Spleen (tissue), 13 donors: ENCODE measurements at regions of chr1 and their contacts with region 1.

Region 1: DNA sequence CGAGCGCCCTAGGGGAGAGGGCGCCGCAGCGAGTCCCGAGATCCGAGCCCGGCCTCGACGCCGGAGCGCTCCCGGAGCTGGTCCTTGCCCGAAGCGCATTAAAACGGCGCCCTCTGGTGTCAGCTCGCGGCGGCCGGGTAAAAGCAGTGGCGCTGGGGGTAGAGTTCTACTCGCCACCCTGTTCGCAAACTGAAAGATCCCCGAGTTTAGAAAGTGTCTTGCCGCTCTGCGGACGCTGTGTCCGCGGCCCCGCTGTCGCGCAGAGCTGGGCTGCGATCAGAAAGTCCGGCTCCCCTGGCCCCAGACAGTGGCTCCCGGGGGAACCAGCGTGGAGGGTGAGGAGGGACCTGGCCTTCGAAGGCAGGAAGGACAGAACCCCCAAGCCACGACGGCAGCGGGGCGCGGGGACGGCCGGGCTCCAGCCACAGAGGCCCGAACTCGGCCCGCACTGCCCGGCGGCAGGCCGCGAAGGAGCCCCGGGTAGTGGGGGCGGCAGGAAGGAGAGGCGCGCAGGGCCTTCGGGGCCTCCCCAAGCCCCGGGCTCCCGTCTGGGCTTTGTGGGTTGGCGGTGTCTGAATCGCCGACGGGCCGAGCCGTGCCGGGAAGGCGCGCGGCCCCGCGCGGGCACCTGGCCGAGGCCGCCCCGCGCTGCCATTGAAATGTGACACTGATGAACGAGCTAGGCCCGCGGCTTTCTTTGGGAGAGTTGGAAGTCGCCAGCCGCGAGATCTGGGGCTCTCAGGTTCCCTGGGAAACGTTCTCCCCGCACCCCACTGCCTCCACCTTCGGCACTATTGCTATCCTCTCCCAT is 39.1 kb upstream of the NFIA start:
- DNase-seq: peak; percentile 95
- H3K4me3 ChIP-seq: peak overlapping the region; percentile 4 to 71 (median 39)
- H3K27ac ChIP-seq: peak overlapping the region; percentile 59 to 85 (median 77)
- H3K4me1 ChIP-seq: peaks cover 8 to 14% (median 12%) of the 10 kb centered on the region in 6 donors
- H3K27me3 ChIP-seq: peaks cover 0 to 40% (median 5%) of the 10 kb centered on the region in 7 donors
- CTCF ChIP-seq: peak; percentile 60 to 90 (median 86)
- POLR2A ChIP-seq: no peak

Region 2: DNA sequence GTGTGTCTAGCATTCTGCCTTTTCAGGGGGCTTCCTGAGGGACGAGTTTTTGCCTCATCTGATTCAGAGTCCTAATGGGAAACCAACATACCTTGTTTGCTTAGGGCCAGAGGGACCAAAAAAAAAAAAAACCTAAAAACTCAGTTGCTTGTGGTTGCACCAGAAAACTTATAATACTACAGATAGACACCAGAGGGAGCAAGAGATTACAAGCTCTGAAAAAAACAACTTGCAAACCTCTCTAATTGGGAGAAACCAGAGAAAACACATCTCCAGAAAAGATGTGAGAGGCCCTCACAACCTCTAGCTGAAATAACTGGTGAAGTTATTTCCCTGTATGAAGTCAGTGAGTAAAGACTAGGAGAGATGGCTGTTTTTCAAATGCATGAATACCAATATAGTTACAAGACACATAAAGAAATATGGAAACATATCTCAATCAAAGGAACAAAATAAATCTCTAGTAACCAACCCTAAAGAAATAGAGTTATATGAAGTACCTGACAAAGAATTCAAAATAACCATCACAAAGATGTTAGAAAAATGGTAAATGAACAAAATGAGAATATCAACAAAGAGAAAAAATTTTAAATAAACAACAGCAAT is 194.5 kb before region 1 on chr1:
- intact Hi-C with region 1: loop called (anchors 5 kb)
- DNase-seq: no peak
- H3K4me3 ChIP-seq: no peak overlapping the region
- H3K27ac ChIP-seq: no peak overlapping the region
- H3K4me1 ChIP-seq: no peaks in the 10 kb centered on the region
- H3K27me3 ChIP-seq: no peaks in the 10 kb centered on the region
- CTCF ChIP-seq: peak in 8 of 11 experiments; percentile 20 to 52 (median 35)
- POLR2A ChIP-seq: no peak

Region 3: DNA sequence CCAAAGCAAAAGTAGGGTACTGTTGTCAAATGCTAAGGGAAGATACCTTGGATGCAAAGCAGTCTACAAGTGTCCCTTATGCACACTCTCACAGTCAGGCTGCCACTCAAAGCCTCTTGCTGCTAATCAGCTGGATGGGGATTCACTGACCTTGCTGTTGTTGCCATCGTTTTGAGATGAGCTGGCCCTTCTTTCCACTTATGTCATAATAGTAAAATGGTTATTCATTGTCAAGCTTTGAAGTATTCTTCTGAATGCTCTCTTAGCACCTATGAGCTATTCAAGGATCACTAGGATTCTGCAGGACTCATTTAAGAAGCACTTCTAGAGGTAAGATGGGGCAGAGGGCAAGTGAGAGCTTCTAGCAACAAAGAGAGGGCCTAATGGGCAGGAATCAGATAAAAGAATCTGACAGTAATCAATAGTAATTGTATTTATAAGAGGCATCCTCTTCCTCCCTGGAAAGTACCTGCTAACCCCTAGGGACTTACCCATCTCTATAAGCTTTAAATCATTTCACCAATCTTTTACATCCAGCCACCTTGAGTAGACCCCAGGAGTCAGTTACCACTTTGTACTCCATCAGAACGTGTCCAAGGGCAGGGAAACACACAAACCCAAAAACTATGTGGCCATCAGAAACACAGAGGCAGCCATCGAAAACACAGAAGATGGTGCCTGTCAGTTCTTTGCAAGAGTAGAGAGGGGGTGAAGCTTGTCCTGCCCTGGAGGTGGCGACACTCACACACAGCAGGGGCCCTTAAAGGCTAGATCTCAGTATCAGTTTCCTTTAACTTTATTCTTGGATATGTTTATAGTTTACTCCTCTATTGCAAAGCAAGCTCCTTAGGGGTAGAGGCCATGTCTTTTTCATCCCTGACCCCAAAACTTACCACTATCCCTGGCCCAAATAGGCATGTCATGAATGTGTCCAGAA is 64.5 kb before region 1 on chr1:
- intact Hi-C with region 1: loop called (anchors 5 kb)
- DNase-seq: no peak
- H3K4me3 ChIP-seq: no peak overlapping the region
- H3K27ac ChIP-seq: no peak overlapping the region
- H3K4me1 ChIP-seq: no peaks in the 10 kb centered on the region
- H3K27me3 ChIP-seq: no peaks in the 10 kb centered on the region
- CTCF ChIP-seq: peak in 9 of 11 experiments; percentile 19 to 70 (median 46)
- POLR2A ChIP-seq: no peak